Colonic mucosa (tissue), 4 donors: ENCODE measurements at regions of chr3 and their contacts with region 1.

Region 1: DNA sequence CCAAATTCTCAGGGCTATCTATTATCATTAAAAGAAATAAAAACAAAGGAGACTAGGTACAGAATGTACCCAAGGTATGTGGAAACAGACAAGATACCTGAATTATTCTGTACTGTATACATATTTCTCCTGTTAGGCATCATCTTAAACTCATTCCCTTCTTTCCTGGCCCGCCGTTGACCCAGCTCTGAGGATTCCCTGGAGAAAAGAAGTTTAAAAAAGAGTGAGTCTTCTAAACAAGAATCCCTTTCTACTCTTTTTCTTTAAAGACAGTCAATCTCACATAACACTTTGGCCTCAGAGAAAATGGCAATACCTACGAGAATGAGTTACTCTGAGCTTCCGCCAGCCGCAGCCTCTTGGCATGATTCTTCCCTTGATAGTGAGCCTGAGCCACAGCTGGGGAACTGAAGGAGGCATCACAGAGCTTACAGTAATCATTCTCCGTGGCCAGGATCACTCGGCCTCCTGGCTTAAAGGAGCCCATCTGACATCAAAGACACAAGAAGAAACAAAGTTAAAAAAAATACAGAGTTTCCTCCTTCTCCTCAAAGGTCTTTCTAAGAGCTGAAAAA is 44.2 kb downstream of the ZMAT3 start:
- DNase-seq: no peak
- H3K4me3 ChIP-seq: no peak overlapping the region
- H3K27ac ChIP-seq: no peak overlapping the region
- H3K4me1 ChIP-seq: no peaks in the 10 kb centered on the region
- H3K27me3 ChIP-seq: no peaks in the 10 kb centered on the region
- CTCF ChIP-seq: no peak

Region 2: GRCh38 chr3:179562591-179563270 is 535.3 kb after region 1 on chr3 and contains the start of gene ACTL6A:
- intact Hi-C with region 1: loop called (anchors 10 kb)
- DNase-seq: peak; percentile 100
- H3K4me3 ChIP-seq: peak within 1 kb of the TSS; percentile 91
- H3K27ac ChIP-seq: peak within 1 kb of the TSS; percentile 85
- H3K4me1 ChIP-seq: peaks cover 7% of the 10 kb centered on the region
- H3K27me3 ChIP-seq: no peaks in the 10 kb centered on the region
- CTCF ChIP-seq: no peak
- total RNA-seq, gene ACTL6A: 37.2 to 49.7 TPM

Region 3: DNA sequence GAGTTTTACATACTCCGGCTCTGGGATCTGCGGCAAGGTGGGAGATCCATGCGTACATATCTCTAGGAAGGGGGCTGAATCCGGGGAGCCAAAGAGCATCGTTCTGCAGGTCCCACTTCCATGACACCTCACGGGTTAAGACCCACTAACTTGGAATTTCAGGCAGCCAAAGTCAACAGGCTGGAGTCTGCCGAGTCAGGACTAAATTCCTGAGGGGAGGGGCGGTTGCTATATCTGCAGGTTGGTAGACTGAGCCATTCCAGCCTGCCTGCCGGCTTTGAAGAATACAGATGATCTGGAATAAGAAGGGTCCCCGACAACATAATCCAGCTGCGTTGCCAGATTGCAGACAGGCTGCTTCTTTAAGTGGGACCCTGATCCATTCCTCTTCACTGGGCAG is 1074.7 kb after region 1 on chr3:
- intact Hi-C with region 1: no loop called
- DNase-seq: no peak
- H3K4me3 ChIP-seq: no peak overlapping the region
- H3K27ac ChIP-seq: no peak overlapping the region
- H3K4me1 ChIP-seq: no peaks in the 10 kb centered on the region
- H3K27me3 ChIP-seq: no peaks in the 10 kb centered on the region
- CTCF ChIP-seq: no peak